Aorta (tissue), 5 donors: ENCODE measurements at regions of chr18 and their contacts with region 1.

Region 1: GRCh38 chr18:45626330-45627203 is 11.3 kb downstream of the SLC14A2 start:
- DNase-seq: no peak
- ATAC-seq: peak; percentile 27
- H3K4me3 ChIP-seq: no peak overlapping the region
- H3K27ac ChIP-seq: peak overlapping the region in 1 of 2 donors; percentile 76
- H3K4me1 ChIP-seq: no peaks in the 10 kb centered on the region
- H3K27me3 ChIP-seq: no peaks in the 10 kb centered on the region

Region 2: DNA sequence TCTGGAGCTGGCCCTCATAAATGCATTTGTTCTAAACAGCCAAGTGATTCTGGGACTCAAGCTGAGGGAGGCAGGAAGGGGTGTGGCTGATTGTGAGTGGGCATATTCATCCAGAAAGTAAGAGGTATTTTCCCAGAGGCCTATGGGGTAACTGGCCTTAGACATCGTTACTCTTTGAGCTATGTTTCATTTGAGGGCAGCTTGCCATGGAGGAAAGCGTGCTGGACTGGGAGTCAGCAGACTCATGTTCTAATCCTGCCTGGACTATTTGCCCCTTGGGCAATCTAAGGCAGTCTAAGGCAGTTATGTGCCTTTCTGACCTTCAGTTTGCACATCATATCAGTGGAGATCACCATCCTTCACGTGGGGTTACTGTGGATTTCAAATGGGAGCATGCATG is 104.8 kb before region 1 on chr18:
- intact Hi-C with region 1: loop called in 1 of 2 experiments (anchors 5 kb)
- DNase-seq: peak; percentile 75 to 80
- ATAC-seq: peak; percentile 60
- H3K4me3 ChIP-seq: no peak overlapping the region
- H3K27ac ChIP-seq: peak overlapping the region; percentile 1 to 92
- H3K4me1 ChIP-seq: peaks cover 6 to 7% of the 10 kb centered on the region in 2 donors
- H3K27me3 ChIP-seq: no peaks in the 10 kb centered on the region